Heart left ventricle (tissue), 16 donors: ENCODE measurements at regions of chr22 and their contacts with region 1.

Region 1: GRCh38 chr22:37428649-37429586 is 1.6 kb upstream of the ELFN2 start:
- DNase-seq: peak in 1 of 5 donors; percentile 66
- ATAC-seq: peak in 2 of 4 donors; percentile 5 to 35
- H3K4me3 ChIP-seq: no peak overlapping the region
- H3K27ac ChIP-seq: no peak overlapping the region
- H3K4me1 ChIP-seq: peaks cover 0 to 28% (median 4%) of the 10 kb centered on the region in 12 donors
- H3K27me3 ChIP-seq: peaks cover 33 to 97% (median 60%) of the 10 kb centered on the region in 9 donors
- CTCF ChIP-seq: peak; percentile 40 to 65 (median 50)
- POLR2A ChIP-seq: no peak

Region 2: GRCh38 chr22:37328017-37328416 is 100.9 kb before region 1 on chr22:
- intact Hi-C with region 1: loop called in 1 of 10 experiments (anchors 10 kb)
- DNase-seq: no peak
- ATAC-seq: no peak
- H3K4me3 ChIP-seq: no peak overlapping the region
- H3K27ac ChIP-seq: no peak overlapping the region
- H3K4me1 ChIP-seq: peaks cover 0 to 8% (median 0%) of the 10 kb centered on the region in 12 donors
- H3K27me3 ChIP-seq: peaks cover 32 to 96% (median 67%) of the 10 kb centered on the region in 9 donors
- CTCF ChIP-seq: no peak
- POLR2A ChIP-seq: no peak

Region 3: GRCh38 chr22:37418627-37419369 is 10.1 kb before region 1 on chr22:
- intact Hi-C with region 1: loop called in 1 of 10 experiments (anchors 1 kb)
- DNase-seq: no peak
- ATAC-seq: no peak
- H3K4me3 ChIP-seq: no peak overlapping the region
- H3K27ac ChIP-seq: no peak overlapping the region
- H3K4me1 ChIP-seq: peaks cover 0 to 20% (median 5%) of the 10 kb centered on the region in 12 donors
- H3K27me3 ChIP-seq: peaks cover 17 to 86% (median 49%) of the 10 kb centered on the region in 9 donors
- CTCF ChIP-seq: no peak
- POLR2A ChIP-seq: no peak